ENCODE measurements at regions of chr15 and their contacts with region 1.

Region 1: DNA sequence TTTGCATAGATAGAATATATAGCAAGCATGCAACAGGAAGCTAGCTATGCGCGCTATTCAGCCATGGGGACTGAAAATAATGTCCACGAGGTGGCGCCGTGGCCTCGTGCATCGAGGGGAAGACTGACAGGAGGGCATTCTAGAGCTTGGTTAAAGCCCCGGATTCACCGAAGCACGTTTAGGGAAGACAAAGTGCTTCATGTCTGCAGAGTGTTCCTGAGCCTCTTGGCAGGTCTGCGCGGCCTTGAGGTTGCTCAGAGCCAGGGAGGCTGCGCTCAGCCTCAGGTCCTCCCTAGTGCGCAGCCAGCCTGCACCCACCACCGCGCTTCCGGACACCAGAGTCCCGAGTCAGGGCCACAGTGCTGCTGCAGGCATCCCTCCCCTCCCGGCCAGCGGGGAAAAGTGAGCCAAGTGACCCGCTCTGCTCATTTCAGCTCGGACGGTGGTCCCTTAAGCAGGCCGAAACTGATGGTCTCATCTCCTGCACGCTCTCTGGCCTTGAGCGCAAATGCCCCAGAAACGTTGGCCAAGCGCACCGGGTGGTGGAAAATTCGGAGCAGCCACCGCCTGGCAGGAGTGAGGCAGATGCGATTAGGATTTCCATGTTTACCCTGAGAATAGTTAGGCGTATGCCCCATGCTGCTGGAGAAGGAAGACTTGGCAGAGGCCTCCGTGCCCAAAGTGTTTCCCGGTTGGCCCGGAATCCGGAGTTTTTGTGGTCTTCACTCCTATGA is 24.8 kb downstream of the GABRA5 start:
- H3K4me3 ChIP-seq: no peak overlapping the region
- H3K27ac ChIP-seq: no peak overlapping the region
- H3K4me1 ChIP-seq: no peaks in the 10 kb centered on the region
- CTCF ChIP-seq: 0 out of 2 replicates have a peak, but pooled peaks have one; percentile 23

Region 2: DNA sequence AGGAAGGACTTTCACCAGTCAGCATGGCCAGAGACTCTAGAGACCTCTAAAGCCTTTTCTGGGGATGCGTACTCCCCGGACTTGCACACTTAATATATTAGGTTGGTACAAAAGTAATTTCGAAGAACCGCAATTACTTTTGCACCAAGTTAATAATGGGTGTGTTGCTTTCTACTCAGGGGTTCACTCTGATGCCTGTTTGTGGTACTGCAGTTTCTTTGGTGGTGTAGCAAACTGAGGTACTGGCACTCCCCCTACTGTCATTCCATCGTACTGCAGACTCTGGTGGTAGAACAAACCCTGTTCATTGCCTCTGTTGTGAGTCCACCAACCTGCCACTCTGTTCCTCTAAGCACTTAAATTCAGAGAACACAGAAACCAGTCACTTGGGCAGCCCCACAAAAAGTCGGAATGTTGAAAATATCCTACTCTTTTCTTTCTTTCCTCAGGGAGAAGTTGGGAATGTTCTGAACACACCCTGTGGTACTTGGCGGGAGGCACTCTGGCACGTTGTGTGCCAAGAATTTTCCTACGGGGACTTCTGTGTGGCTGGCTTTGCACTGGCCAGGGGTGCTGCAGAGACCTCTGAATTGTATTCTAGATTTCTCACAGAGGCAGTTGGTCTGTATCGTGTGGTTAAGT is 125.7 kb after region 1 on chr15:
- CTCF ChIA-PET with region 1: interaction called, 19 read pairs
- POLR2A ChIA-PET with region 1: no interaction called
- H3K4me3 ChIP-seq: no peak overlapping the region
- H3K27ac ChIP-seq: no peak overlapping the region
- H3K4me1 ChIP-seq: no peaks in the 10 kb centered on the region
- CTCF ChIP-seq: peak; percentile 49; the same call in 1 of the 2 replicates